CD8-positive, alpha-beta T cell (primary cell): ENCODE measurements at regions of chr14 and their contacts with region 1.

Region 1: GRCh38 chr14:75654127-75654732 is 6.4 kb downstream of the ERG28 start:
- DNase-seq: peak; percentile 59 to 86 (median 78)
- ATAC-seq: peak; percentile 99
- H3K4me3 ChIP-seq: no peak overlapping the region
- H3K4me3 Mint-ChIP-seq: no peak overlapping the region
- H3K27ac ChIP-seq: no peak overlapping the region
- H3K27ac Mint-ChIP-seq: no peak overlapping the region
- H3K4me1 ChIP-seq: no peaks in the 10 kb centered on the region
- H3K4me1 Mint-ChIP-seq: peaks cover 14% of the 10 kb centered on the region
- H3K27me3 ChIP-seq: no peaks in the 10 kb centered on the region
- H3K27me3 Mint-ChIP-seq: no peaks in the 10 kb centered on the region
- CTCF ChIP-seq: peak; percentile 92

Region 2: GRCh38 chr14:75126679-75127473 is 527.4 kb before region 1 on chr14 and contains the start of gene NEK9:
- CTCF ChIA-PET with region 1: no interaction called
- POLR2A ChIA-PET with region 1: no interaction called
- intact Hi-C with region 1: loop called in 1 of 2 experiments (anchors 2 kb)
- DNase-seq: peak; percentile 77 to 93 (median 89)
- ATAC-seq: peak; percentile 82
- H3K4me3 ChIP-seq: peak within 1 kb of the TSS; percentile 87 to 95
- H3K4me3 Mint-ChIP-seq: peak within 1 kb of the TSS; percentile 95
- H3K27ac ChIP-seq: peak within 1 kb of the TSS; percentile 87 to 92
- H3K27ac Mint-ChIP-seq: peak within 1 kb of the TSS; percentile 98
- H3K4me1 ChIP-seq: peaks cover 23% of the 10 kb centered on the region
- H3K4me1 Mint-ChIP-seq: peaks cover 46% of the 10 kb centered on the region
- H3K27me3 ChIP-seq: no peaks in the 10 kb centered on the region
- H3K27me3 Mint-ChIP-seq: no peaks in the 10 kb centered on the region
- CTCF ChIP-seq: no peak
- total RNA-seq, gene NEK9: 40.7 to 42.9 TPM

Region 3: DNA sequence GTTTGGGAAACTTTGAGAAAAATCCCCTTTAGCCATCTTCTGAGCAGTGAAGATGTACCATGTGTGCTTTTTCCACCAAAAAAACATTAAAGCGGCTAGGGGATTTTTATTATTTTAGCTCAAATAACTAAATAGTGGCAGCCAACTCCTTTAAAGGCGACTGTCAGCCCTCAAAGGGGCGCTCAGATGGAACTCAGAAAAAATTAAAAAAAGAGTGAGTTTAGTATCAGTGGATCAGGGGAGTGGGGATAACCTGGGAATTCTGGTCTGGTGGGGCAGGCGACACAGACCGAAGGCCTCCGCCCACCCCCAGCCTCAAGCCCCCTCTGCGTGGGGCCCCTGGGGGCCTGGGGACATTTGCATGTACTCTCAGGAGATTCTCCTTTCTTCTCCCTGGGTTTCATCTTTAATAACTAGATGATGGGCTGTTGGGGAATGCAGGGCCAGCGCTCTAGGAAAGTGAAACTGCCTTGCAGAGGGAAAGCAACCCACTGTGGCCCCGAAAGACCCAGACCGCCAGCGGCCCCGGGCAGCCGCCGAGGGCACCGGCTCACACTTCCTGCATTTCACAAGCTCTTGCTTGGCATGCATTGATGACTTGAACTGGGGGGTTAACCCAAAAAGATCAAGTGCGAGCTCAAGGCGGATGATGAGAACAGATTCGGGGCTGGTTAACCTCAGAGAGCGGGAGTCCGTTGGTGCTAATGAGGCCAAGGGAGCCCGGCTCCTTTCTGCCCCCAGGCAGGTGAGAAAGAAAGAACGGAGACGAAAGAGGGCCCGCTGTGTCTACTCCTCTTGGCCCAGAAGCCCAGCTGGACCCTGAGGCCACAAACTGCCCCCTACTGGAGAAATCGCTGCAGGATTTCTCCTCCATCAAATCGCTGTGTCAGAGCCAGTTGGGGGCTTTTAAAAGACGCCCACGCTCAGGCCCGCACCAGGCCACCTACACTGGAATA is 139.3 kb before region 1 on chr14:
- CTCF ChIA-PET with region 1: interaction called, 3 read pairs
- POLR2A ChIA-PET with region 1: no interaction called
- intact Hi-C with region 1: loop called in 1 of 2 experiments (anchors 2 kb)
- DNase-seq: peak; percentile 19 to 83 (median 49)
- ATAC-seq: peak; percentile 69
- H3K4me3 ChIP-seq: peak overlapping the region; percentile 34 to 37
- H3K4me3 Mint-ChIP-seq: peak overlapping the region; percentile 83
- H3K27ac ChIP-seq: peak overlapping the region; percentile 20 to 65
- H3K27ac Mint-ChIP-seq: peak overlapping the region; percentile 89
- H3K4me1 ChIP-seq: peaks cover 23% of the 10 kb centered on the region
- H3K4me1 Mint-ChIP-seq: peaks cover 27% of the 10 kb centered on the region
- H3K27me3 ChIP-seq: no peaks in the 10 kb centered on the region
- H3K27me3 Mint-ChIP-seq: no peaks in the 10 kb centered on the region
- CTCF ChIP-seq: no peak

Region 4: GRCh38 chr14:75577729-75578101 is 76.5 kb before region 1 on chr14:
- CTCF ChIA-PET with region 1: interaction called, 293 read pairs
- POLR2A ChIA-PET with region 1: interaction called, 7 read pairs
- intact Hi-C with region 1: loop called (anchors 1 kb)
- DNase-seq: peak; percentile 34 to 79 (median 69)
- ATAC-seq: peak; percentile 80
- H3K4me3 ChIP-seq: peak overlapping the region; percentile 64 to 72
- H3K4me3 Mint-ChIP-seq: peak overlapping the region; percentile 91
- H3K27ac ChIP-seq: no peak overlapping the region
- H3K27ac Mint-ChIP-seq: peak overlapping the region; percentile 53
- H3K4me1 ChIP-seq: peaks cover 10% of the 10 kb centered on the region
- H3K4me1 Mint-ChIP-seq: peaks cover 23% of the 10 kb centered on the region
- H3K27me3 ChIP-seq: no peaks in the 10 kb centered on the region
- H3K27me3 Mint-ChIP-seq: no peaks in the 10 kb centered on the region
- CTCF ChIP-seq: peak; percentile 62

Region 5: GRCh38 chr14:75642056-75642455 is 12.2 kb before region 1 on chr14:
- CTCF ChIA-PET with region 1: interaction called, 17 read pairs
- POLR2A ChIA-PET with region 1: interaction called, 3 read pairs
- intact Hi-C with region 1: no loop called
- DNase-seq: no peak
- ATAC-seq: no peak
- H3K4me3 ChIP-seq: no peak overlapping the region
- H3K4me3 Mint-ChIP-seq: no peak overlapping the region
- H3K27ac ChIP-seq: no peak overlapping the region
- H3K27ac Mint-ChIP-seq: no peak overlapping the region
- H3K4me1 ChIP-seq: no peaks in the 10 kb centered on the region
- H3K4me1 Mint-ChIP-seq: no peaks in the 10 kb centered on the region
- H3K27me3 ChIP-seq: no peaks in the 10 kb centered on the region
- H3K27me3 Mint-ChIP-seq: no peaks in the 10 kb centered on the region
- CTCF ChIP-seq: no peak

Region 6: DNA sequence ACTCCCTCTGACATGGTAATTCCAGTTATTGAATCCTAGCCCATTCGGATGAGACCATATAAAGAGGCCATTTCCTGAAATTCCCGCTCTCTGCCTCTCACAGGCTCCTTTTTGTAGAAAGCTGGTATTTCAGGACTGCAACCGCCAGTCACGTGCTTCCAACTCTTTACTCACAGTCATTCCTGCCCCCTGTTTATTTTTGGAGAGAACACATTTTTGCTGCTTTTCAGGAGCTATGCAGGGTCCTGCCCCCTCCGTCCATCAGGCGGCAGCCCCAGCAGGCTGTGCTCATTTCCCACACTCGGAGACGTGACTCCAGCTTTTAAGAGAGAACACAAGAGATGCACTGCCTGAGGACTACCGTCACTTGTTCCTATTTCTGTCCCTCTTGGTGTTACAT is 358.1 kb after region 1 on chr14:
- CTCF ChIA-PET with region 1: no interaction called
- POLR2A ChIA-PET with region 1: no interaction called
- intact Hi-C with region 1: no loop called
- DNase-seq: no peak
- ATAC-seq: no peak
- H3K4me3 ChIP-seq: no peak overlapping the region
- H3K4me3 Mint-ChIP-seq: no peak overlapping the region
- H3K27ac ChIP-seq: no peak overlapping the region
- H3K27ac Mint-ChIP-seq: no peak overlapping the region
- H3K4me1 ChIP-seq: no peaks in the 10 kb centered on the region
- H3K4me1 Mint-ChIP-seq: no peaks in the 10 kb centered on the region
- H3K27me3 ChIP-seq: no peaks in the 10 kb centered on the region
- H3K27me3 Mint-ChIP-seq: no peaks in the 10 kb centered on the region
- CTCF ChIP-seq: no peak